Panc1 (cell line): ENCODE measurements at regions of chr3 and their contacts with region 1.

Region 1: GRCh38 chr3:124467980-124468902 is 262.0 kb upstream of the UMPS start:
- DNase-seq: peak; percentile 33
- ATAC-seq: peak; percentile 95
- H3K4me3 ChIP-seq: no peak overlapping the region
- H3K27ac ChIP-seq: no peak overlapping the region
- H3K4me1 ChIP-seq: no peaks in the 10 kb centered on the region
- H3K27me3 ChIP-seq: peaks cover 45% of the 10 kb centered on the region
- CTCF ChIP-seq: peak; percentile 99

Region 2: DNA sequence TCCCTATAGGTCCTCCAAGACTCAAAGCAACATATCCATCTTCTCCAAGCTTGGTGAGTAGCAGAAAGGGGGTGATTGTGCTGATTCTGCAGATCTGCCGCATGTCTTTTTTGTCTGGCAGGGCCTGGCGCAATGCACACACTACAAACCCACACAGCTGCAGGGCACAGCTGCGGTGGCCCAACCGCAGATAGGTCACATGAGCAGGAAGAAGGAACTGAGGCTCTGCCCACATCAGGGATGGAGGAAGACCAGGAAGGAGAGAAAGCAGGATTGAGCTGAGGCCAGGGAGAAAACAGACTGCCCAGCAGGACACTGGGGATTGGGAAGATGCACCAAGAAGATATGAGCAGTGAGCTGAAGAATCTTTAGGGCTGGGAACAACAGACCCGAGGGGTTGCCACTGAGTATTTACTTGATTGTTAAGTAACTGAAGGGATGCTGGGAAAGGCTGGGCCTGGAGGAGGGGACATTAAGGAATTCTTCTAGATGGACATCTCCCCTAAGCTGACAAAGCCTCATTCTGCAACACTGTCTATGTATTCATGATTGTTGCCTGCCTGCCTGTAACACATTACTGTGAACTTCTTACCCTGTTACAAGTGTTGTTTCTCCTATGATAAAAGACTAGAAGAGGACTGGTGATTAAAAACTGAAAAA is 710.8 kb before region 1 on chr3:
- CTCF ChIA-PET with region 1: no interaction called
- POLR2A ChIA-PET with region 1: no interaction called
- in situ Hi-C with region 1: no loop called
- intact Hi-C with region 1: no loop called
- DNase-seq: no peak
- ATAC-seq: no peak
- H3K4me3 ChIP-seq: no peak overlapping the region
- H3K27ac ChIP-seq: no peak overlapping the region
- H3K4me1 ChIP-seq: peaks cover 9% of the 10 kb centered on the region
- H3K27me3 ChIP-seq: no peaks in the 10 kb centered on the region
- CTCF ChIP-seq: no peak

Region 3: GRCh38 chr3:124014366-124014942 is 453.8 kb before region 1 on chr3:
- CTCF ChIA-PET with region 1: no interaction called
- POLR2A ChIA-PET with region 1: no interaction called
- in situ Hi-C with region 1: no loop called
- intact Hi-C with region 1: loop called (anchors 1 kb)
- DNase-seq: no peak
- ATAC-seq: no peak
- H3K4me3 ChIP-seq: no peak overlapping the region
- H3K27ac ChIP-seq: no peak overlapping the region
- H3K4me1 ChIP-seq: no peaks in the 10 kb centered on the region
- H3K27me3 ChIP-seq: peaks cover 33% of the 10 kb centered on the region
- CTCF ChIP-seq: no peak

Region 4: GRCh38 chr3:124097362-124098131 is 370.7 kb before region 1 on chr3:
- CTCF ChIA-PET with region 1: no interaction called
- POLR2A ChIA-PET with region 1: no interaction called
- in situ Hi-C with region 1: no loop called
- intact Hi-C with region 1: loop called (anchors 10 kb)
- DNase-seq: no peak
- ATAC-seq: no peak
- H3K4me3 ChIP-seq: no peak overlapping the region
- H3K27ac ChIP-seq: no peak overlapping the region
- H3K4me1 ChIP-seq: no peaks in the 10 kb centered on the region
- H3K27me3 ChIP-seq: peaks cover 31% of the 10 kb centered on the region
- CTCF ChIP-seq: no peak

Region 5: DNA sequence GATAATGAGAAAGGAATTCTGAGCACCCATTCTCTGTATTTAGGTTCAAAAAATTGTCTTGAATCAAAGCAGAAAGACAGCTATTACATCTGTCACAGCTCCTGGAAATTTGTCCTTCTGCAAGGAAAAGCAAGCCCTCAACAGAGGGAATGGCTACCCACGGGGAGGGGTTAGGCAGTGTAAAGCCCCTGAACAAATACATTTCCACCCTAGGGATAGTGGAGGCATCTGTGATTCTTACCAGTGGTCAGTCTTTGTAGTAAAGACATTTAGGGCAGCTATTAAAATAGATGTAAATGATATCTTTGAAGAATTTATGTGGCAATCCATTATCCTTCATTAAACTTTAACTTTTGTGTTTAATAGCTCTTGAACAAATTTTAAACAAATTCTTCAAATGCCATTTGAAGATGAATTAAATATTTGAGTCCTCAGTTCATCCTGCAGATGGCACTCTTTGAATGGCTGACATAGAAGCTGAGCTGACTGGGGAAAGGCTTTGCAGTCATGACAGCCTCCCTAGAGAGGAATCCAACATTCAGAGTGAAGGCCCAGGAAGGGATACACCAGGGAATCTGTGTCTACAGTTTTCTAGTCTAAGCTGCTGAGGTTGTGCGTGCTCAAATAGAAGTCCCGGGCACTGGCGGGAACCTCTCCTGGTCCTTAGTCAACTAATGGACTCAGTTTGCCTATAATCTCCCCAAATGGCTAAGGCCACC is 116.7 kb before region 1 on chr3:
- CTCF ChIA-PET with region 1: no interaction called
- POLR2A ChIA-PET with region 1: no interaction called
- in situ Hi-C with region 1: no loop called
- intact Hi-C with region 1: loop called (anchors 1 kb)
- DNase-seq: peak; percentile 17
- ATAC-seq: peak; percentile 79
- H3K4me3 ChIP-seq: no peak overlapping the region
- H3K27ac ChIP-seq: no peak overlapping the region
- H3K4me1 ChIP-seq: no peaks in the 10 kb centered on the region
- H3K27me3 ChIP-seq: peaks cover 9% of the 10 kb centered on the region
- CTCF ChIP-seq: peak; percentile 73